ENCODE measurements at regions of chr14 and their contacts with region 1.

Region 1: DNA sequence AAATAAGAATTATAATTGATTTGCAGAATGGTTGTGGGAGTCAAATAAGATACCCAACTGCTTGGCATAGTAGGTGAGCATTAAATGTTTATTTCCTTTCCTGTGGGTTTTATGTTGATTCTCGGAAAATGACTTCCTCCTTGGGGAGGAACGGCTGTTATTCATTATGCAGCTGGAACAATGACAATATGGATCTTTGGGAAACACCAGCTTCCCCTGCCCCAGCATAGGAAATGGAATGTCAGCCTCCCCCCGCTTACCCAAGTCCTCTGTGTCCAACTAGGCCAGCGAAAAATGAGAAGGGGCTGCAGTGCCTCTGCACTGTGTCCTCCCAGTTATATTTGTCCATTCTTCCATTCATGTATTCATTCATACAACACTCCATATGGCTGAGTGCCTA is 11.7 kb upstream of the CCDC177 start:
- DNase-seq: no peak
- ATAC-seq: no peak
- H3K4me3 ChIP-seq: no peak overlapping the region
- H3K27ac ChIP-seq: no peak overlapping the region
- H3K4me1 ChIP-seq: no peaks in the 10 kb centered on the region
- CTCF ChIP-seq: no peak
- EP300 ChIP-seq: no peak
- POLR2A ChIP-seq: no peak
- RAD21 ChIP-seq: no peak

Region 2: GRCh38 chr14:69483765-69484443 is 102.5 kb before region 1 on chr14:
- CTCF ChIA-PET with region 1: no interaction called
- POLR2A ChIA-PET with region 1: no interaction called
- DNase-seq: peak; percentile 16 to 33
- ATAC-seq: peak; percentile 41 to 62; a peak in 5 of 6 replicates
- H3K4me3 ChIP-seq: peak overlapping the region; percentile 55
- H3K27ac ChIP-seq: peak overlapping the region in 1 of 2 experiments; percentile 30; a peak in 2 of 6 replicates
- H3K4me1 ChIP-seq: 0 out of 3 replicates have a peak, but pooled peaks cover 4% of the 10 kb centered on the region
- CTCF ChIP-seq: no peak
- EP300 ChIP-seq: no peak
- POLR2A ChIP-seq: no peak
- RAD21 ChIP-seq: no peak

Region 3: GRCh38 chr14:69559581-69560011 is 26.8 kb before region 1 on chr14:
- CTCF ChIA-PET with region 1: interaction called, 20 read pairs
- POLR2A ChIA-PET with region 1: no interaction called
- DNase-seq: no peak
- ATAC-seq: no peak; a peak in 2 of 6 replicates
- H3K4me3 ChIP-seq: no peak overlapping the region
- H3K27ac ChIP-seq: no peak overlapping the region
- H3K4me1 ChIP-seq: no peaks in the 10 kb centered on the region
- CTCF ChIP-seq: no peak
- EP300 ChIP-seq: no peak
- POLR2A ChIP-seq: no peak
- RAD21 ChIP-seq: no peak

Region 4: DNA sequence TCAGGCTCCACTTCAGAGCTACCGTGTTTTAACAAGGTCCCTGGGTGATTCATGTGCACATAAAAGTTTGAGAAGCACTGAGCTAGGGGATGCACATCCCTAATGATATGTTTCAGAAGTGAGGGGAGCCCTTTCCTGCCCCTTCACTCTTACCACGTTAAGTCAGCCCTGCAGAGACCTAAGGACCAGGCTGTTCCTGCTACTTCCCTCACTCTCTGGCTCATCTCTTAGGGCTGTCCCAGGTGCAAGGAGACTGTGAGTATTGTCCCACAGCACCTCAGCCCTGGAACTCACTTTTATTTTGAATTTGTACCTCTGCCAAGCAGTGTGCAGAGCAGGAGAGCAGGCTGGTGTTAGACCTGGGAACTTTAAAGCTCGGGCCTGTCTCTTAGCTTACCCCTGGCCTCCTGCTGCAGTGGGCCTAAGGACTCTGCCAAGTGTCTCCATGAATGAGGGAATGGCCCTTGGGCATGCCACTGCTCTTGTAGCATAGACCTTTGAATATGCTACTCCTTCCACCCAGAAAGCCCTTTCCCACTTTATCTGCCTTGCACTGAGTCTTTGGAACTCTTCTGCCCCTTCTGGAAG is 14.0 kb after region 1 on chr14:
- CTCF ChIA-PET with region 1: interaction called, 25 read pairs
- POLR2A ChIA-PET with region 1: no interaction called
- DNase-seq: no peak
- ATAC-seq: peak; percentile 17 to 44; a peak in 2 of 6 replicates
- H3K4me3 ChIP-seq: no peak overlapping the region
- H3K27ac ChIP-seq: no peak overlapping the region
- H3K4me1 ChIP-seq: no peaks in the 10 kb centered on the region
- CTCF ChIP-seq: no peak
- EP300 ChIP-seq: no peak
- POLR2A ChIP-seq: no peak
- RAD21 ChIP-seq: no peak

Region 5: DNA sequence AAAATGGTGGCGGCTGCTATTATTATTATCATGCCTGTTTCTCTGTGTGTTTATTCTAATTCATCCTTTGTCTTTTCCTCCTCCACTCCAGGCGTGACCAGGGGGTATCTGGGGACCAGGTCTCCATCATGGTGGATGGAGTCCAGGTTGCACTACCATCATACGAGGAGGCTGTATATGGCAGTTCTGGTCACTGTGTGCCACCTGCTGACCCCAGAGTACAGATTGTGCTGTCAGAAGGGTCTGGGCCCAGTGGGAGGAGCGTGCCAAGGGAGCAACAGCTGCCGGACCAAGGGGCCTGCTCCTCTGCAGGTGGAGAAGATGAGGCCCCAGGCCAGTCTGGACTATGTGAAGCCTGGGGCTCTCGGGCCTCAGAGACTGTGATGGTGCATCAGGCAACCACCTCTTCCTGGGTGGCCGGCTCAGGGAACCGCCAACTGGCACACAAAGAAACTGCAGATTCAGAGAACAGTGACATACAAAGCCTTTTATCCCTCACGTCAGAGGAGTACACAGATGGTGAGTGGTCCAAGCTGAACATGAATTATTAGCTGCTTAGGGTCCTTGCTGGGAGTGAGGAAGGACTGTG is 122.3 kb after region 1 on chr14:
- CTCF ChIA-PET with region 1: interaction called, 18 read pairs
- POLR2A ChIA-PET with region 1: no interaction called
- DNase-seq: peak in 1 of 2 experiments; percentile 40
- ATAC-seq: peak; percentile 92 to 94
- H3K4me3 ChIP-seq: no peak overlapping the region
- H3K27ac ChIP-seq: no peak overlapping the region
- H3K4me1 ChIP-seq: peaks cover 15% of the 10 kb centered on the region
- CTCF ChIP-seq: peak; percentile 35; the same call in 2 of the 3 replicates
- EP300 ChIP-seq: no peak
- POLR2A ChIP-seq: no peak
- RAD21 ChIP-seq: peak; percentile 25 to 36; a peak in 2 of 5 replicates